ENCODE measurements at regions of chr1 and their contacts with region 1.

Region 1: GRCh38 chr1:25117233-25117823 is 115.0 kb downstream of the SYF2 start:
- DNase-seq: peak; percentile 70
- H3K4me3 ChIP-seq: no peak overlapping the region
- H3K27ac ChIP-seq: no peak overlapping the region
- H3K4me1 ChIP-seq: no peaks in the 10 kb centered on the region
- CTCF ChIP-seq: peak; percentile 83

Region 2: GRCh38 chr1:25065795-25066238 is 51.5 kb before region 1 on chr1:
- CTCF ChIA-PET with region 1: no interaction called
- POLR2A ChIA-PET with region 1: no interaction called
- intact Hi-C with region 1: no loop called
- DNase-seq: no peak
- H3K4me3 ChIP-seq: no peak overlapping the region
- H3K27ac ChIP-seq: no peak overlapping the region
- H3K4me1 ChIP-seq: no peaks in the 10 kb centered on the region
- CTCF ChIP-seq: no peak

Region 3: DNA sequence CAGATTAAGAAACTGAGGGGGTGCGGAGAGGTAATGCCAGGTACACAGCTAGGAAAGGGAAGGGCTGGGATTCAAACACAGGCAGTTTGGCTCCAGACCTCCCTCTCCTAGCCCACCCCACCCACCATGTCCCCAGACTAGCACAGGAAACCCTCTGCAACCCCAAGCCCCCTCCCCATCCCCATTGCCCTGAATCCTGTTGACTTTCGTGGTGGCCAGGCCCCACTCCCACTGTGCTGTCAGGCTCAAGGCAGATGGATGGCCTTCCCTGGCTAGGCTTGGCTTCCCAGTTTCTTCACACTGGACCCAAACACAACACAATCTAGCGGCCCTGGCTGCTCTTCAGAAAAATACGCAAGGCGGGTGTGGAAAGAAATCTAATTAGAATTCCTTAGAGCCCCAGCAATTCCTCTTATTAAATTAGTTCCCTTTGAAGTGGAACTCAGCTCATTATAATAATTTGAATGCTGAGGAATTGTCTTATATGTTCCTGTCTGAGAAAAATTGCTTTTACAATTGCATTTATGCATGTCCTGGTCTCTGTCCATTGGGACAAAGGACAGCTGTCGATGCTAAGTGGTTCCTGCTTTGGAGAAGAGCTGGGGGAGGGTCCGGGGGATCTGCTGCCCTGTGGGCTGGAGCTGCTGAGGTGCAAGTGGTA is 17.6 kb after region 1 on chr1:
- CTCF ChIA-PET with region 1: no interaction called
- POLR2A ChIA-PET with region 1: no interaction called
- intact Hi-C with region 1: no loop called
- DNase-seq: no peak
- H3K4me3 ChIP-seq: no peak overlapping the region
- H3K27ac ChIP-seq: no peak overlapping the region
- H3K4me1 ChIP-seq: no peaks in the 10 kb centered on the region
- CTCF ChIP-seq: no peak

Region 4: GRCh38 chr1:25148673-25149300 is 31.5 kb after region 1 on chr1:
- CTCF ChIA-PET with region 1: interaction called, 7 read pairs
- POLR2A ChIA-PET with region 1: no interaction called
- intact Hi-C with region 1: loop called (anchors 1 kb)
- DNase-seq: peak; percentile 72
- H3K4me3 ChIP-seq: no peak overlapping the region
- H3K27ac ChIP-seq: no peak overlapping the region
- H3K4me1 ChIP-seq: peaks cover 29% of the 10 kb centered on the region
- CTCF ChIP-seq: peak; percentile 91

Region 5: GRCh38 chr1:25204797-25205480 is 87.6 kb after region 1 on chr1:
- CTCF ChIA-PET with region 1: no interaction called
- POLR2A ChIA-PET with region 1: no interaction called
- intact Hi-C with region 1: loop called (anchors 1 kb)
- DNase-seq: peak; percentile 71
- H3K4me3 ChIP-seq: no peak overlapping the region
- H3K27ac ChIP-seq: no peak overlapping the region
- H3K4me1 ChIP-seq: no peaks in the 10 kb centered on the region
- CTCF ChIP-seq: peak; percentile 97

Measured in OCI-LY7 (cell line).